ENCODE measurements at regions of chr19 and their contacts with region 1.

Region 1: DNA sequence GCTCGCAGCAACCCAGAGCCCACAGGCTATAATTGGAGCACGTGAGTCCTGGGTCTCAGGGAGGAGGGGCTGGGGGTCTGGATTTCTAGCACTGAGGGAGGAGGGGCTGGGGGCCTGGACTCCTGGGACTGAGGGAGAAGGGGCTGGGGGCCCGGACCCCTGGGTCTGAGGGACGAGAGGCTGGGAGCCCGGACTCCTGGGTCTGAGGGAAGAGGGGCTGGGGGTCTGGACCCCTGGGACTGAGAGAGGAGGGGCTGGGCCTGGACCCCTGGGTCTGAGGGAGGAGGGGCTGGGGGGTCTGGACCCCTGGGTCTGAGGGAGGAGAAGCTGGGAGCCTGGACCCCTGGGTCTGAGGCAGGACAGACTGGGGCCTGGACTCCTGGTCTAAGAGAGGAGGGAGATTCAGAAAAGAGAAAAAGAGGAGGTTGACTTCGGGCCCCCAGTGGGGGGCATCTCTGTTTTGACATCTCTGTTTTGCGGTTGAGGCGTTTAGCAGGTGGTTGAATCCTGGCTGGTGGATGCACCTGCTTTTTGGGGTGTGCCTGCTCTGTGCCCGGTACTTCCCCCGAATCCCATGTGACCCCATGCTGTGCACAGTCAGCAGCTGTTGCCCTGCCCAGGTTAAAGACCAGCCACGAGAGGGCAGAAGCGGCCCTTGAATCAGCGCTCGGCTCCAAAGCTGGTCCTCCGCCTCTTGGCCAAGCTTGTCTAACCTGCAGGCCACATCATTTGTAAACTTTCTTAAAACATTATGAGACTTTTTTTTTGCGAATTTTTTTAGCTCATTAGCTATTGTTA is 10.5 kb downstream of the PVR start:
- DNase-seq: peak; percentile 87
- CTCF ChIP-seq: peak; percentile 92

Region 2: DNA sequence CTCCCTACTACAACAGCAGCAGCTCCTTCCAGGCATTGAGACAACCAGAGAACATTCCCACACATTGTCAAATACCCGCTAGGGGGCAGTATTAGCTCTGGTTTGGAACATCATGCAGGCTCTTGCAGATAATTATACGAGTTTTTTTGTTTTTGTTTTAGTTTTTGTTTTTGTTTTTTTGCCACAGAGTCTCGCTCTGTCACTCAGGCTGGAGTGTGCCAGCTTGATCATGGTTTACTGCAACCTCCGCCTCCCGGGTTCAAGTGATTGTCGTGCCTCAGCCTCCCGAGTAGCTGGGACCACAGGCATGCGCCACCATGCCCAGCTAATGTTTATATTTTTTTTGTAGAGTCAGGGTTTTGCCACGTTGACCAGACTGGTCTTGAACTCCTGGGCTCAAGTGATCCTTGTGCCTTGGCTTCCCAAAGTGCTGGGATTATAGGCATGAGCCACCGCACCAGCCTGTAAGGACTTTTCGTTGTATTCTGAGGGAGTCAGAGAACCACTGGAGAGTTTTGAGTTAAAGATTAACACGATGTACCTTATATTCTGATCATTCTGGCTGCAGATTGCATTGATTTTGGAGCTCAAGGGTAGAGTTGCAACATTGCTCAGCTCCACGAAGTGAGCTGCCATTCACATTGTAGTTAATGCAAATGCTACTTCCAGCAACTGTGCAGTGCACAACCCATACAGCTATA is 83.0 kb before region 1 on chr19:
- CTCF ChIA-PET with region 1: interaction called, 20 read pairs
- POLR2A ChIA-PET with region 1: no interaction called
- DNase-seq: peak; percentile 48
- CTCF ChIP-seq: peak; percentile 65

Region 3: DNA sequence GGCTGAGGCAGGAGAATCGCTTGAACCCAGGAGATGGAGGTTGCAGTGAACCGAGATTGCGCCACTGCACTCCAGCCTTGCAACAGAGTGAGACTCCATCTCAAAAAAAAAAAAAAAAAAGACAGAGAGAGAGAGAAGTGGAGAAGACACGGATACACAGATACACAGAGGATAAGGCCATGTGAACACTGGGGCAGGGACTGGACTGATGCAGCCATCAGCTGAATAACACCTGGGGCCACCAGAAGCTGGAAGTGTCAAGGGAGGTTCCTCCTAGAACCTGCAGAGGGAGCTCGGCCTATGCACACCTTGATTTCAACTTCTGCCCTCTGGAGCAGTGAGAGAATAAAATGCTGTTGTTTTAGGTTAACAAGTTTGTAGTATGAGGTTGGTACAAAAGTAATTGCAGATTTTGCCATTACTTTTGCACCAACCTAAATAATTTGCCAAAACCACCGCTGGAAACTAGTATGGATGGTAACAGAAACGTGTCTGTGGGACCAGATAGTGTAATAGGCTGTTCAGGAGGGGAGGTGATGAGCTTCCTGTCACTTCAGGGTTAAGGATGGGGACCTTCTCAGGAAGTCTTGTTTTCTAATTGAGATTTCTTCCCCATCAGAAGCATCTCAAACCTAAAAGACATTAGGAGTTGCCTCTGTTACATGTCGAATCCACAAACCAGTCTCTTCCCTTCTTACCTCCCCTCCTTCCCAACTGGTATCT is 77.2 kb before region 1 on chr19:
- CTCF ChIA-PET with region 1: interaction called, 14 read pairs
- POLR2A ChIA-PET with region 1: no interaction called
- DNase-seq: no peak
- CTCF ChIP-seq: peak; percentile 34

Region 4: GRCh38 chr19:44702551-44703176 is 48.5 kb after region 1 on chr19:
- CTCF ChIA-PET with region 1: no interaction called
- POLR2A ChIA-PET with region 1: no interaction called
- DNase-seq: no peak
- CTCF ChIP-seq: no peak